Pancreas (tissue), 10 donors: ENCODE measurements at regions of chr1 and their contacts with region 1.

Region 1: GRCh38 chr1:42335050-42335808 is at the start of gene FOXJ3:
- DNase-seq: peak; percentile 90 to 95 (median 93)
- ATAC-seq: peak; percentile 88 to 94 (median 92)
- H3K4me3 ChIP-seq: peak within 1 kb of the TSS; percentile 84 to 99 (median 96)
- H3K27ac ChIP-seq: peak within 1 kb of the TSS; percentile 81 to 96 (median 90)
- H3K4me1 ChIP-seq: peaks cover 31 to 42% (median 41%) of the 10 kb centered on the region in 3 donors
- H3K27me3 ChIP-seq: no peaks in the 10 kb centered on the region
- CTCF ChIP-seq: no peak
- total RNA-seq, gene FOXJ3: 18.6 to 25.5 (median 22.5) TPM

Region 2: GRCh38 chr1:42173155-42173933 is 161.9 kb before region 1 on chr1:
- intact Hi-C with region 1: loop called in 1 of 3 experiments (anchors 10 kb)
- DNase-seq: peak in 5 of 6 donors; percentile 40 to 85 (median 69)
- ATAC-seq: peak; percentile 65 to 83 (median 80)
- H3K4me3 ChIP-seq: no peak overlapping the region
- H3K27ac ChIP-seq: peak overlapping the region in 3 of 4 donors; percentile 57 to 63 (median 57)
- H3K4me1 ChIP-seq: peaks cover 15 to 27% (median 21%) of the 10 kb centered on the region in 3 donors
- H3K27me3 ChIP-seq: no peaks in the 10 kb centered on the region
- CTCF ChIP-seq: peak; percentile 88 to 97 (median 92)

Region 3: DNA sequence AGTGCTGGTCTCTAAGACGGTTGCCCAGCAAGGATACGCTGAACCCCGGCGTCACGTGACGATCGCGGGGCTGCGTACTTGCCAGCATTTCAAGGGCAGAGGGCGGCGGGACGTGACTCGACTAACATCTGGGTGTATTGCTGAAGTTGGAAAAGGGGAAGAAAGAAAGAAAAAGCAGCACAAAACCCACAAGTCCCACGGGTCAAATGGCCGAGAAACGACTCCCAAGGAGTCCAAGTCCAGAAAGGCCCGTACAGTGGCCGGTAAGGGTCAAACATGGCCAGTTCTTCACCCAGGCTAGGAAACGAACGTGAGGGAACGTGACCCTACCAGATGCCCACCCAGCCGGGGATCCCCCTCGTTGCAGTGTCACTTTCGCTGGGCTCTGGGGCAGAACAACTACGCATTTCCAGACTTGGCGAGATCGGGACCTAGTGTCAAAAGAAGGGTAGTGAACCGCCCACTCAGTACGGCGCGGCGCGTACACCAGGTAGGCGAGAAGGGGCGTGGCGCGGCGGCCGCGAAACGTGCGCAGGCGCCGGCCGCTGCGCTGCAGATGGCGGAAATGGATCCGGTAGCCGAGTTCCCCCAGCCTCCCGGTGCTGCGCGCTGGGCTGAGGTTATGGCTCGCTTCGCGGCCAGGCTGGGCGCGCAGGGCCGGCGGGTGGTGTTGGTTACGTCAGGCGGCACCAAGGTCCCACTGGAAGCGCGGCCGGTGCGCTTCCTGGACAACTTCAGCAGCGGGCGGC is 121.0 kb after region 1 on chr1 and contains the starts of genes PPCS and ZMYND12:
- intact Hi-C with region 1: loop called in 1 of 3 experiments (anchors 10 kb)
- DNase-seq: peak; percentile 83 to 94 (median 89)
- ATAC-seq: peak; percentile 93 to 97 (median 95)
- H3K4me3 ChIP-seq: peak within 1 kb of the TSS; percentile 85 to 99 (median 92)
- H3K27ac ChIP-seq: peak within 1 kb of the TSS; percentile 92 to 97 (median 94)
- H3K4me1 ChIP-seq: peaks cover 12 to 23% (median 16%) of the 10 kb centered on the region in 3 donors
- H3K27me3 ChIP-seq: no peaks in the 10 kb centered on the region
- CTCF ChIP-seq: peak in 1 of 4 donors; percentile 10
- total RNA-seq, gene PPCS: 25.5 to 40.7 (median 34.4) TPM
- total RNA-seq, gene ZMYND12: 1.0 to 2.8 (median 1.7) TPM

Region 4: DNA sequence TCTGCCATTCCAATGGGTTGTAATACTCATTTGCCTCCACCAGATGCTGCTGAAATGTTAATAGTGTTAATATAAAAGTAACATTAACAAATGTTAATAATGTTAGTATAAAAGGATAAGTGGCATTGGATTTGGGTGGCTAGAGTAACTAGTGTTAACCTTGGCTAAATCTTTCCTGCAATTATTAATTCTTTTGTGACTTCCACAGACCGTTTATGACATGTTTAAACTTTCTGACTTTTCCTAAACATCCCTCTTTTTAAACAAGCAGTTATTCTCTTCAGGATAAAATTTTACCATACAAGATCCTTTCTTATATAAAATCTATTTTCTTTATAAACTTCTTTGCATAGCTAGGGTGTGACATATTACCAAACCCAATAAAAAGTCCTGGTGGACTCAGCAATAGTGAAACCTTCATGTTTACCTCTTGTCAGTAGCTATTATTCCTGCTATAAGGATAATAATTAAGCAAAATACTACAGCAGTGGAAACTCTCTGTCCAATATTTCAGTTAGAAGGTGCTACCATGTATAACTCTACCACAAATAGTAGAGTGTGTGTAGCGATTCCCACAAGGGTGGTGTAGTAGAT is 169.4 kb after region 1 on chr1:
- intact Hi-C with region 1: no loop called
- DNase-seq: no peak
- ATAC-seq: no peak
- H3K4me3 ChIP-seq: no peak overlapping the region
- H3K27ac ChIP-seq: no peak overlapping the region
- H3K4me1 ChIP-seq: no peaks in the 10 kb centered on the region
- H3K27me3 ChIP-seq: no peaks in the 10 kb centered on the region
- CTCF ChIP-seq: no peak